ENCODE measurements at regions of chr12 and their contacts with region 1.

Region 1: DNA sequence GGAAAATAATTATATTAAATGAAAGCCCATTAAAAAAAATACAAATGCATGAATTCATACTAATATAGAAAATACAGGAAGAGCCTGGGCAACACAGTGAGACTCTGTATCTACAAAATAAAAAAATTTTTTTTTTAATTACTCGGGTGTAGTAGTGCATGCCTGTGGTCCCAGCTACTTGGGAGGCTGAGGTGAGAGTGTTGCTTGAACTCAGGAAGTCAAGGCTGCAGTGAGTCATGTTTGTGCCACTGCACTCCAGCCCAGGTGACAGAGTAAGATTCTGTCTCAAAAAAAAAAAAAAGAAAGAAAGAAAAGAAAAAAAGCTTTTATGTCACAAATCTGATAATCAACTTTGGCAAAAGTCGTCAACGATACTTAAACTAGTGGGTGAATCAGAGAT is 80.6 kb upstream of the PLEKHA5 start:
- DNase-seq: no peak
- H3K4me3 ChIP-seq: no peak overlapping the region
- H3K27ac ChIP-seq: no peak overlapping the region
- H3K27me3 ChIP-seq: no peaks in the 10 kb centered on the region
- CTCF ChIP-seq: no peak

Region 2: DNA sequence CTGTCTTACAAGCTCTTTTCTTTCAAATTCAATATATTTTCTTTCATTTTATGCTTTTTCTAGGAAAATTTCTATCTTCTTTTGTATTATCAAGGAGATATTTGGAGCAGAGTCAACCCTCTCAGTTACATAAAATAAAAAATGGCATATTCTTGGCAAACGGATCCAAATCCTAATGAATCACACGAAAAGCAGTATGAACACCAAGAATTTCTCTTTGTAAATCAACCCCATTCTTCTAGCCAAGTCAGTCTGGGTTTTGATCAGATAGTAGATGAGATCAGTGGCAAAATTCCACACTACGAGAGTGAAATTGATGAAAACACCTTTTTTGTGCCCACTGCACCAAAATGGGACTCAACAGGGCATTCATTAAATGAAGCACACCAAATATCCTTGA is 767.0 kb before region 1 on chr12:
- CTCF ChIA-PET with region 1: no interaction called
- POLR2A ChIA-PET with region 1: interaction called, 11 read pairs
- DNase-seq: no peak
- H3K4me3 ChIP-seq: no peak overlapping the region
- H3K27ac ChIP-seq: no peak overlapping the region
- H3K27me3 ChIP-seq: no peaks in the 10 kb centered on the region
- CTCF ChIP-seq: no peak

Region 3: GRCh38 chr12:19901841-19902240 is 852.9 kb after region 1 on chr12:
- CTCF ChIA-PET with region 1: no interaction called
- POLR2A ChIA-PET with region 1: no interaction called
- DNase-seq: no peak
- H3K4me3 ChIP-seq: no peak overlapping the region
- H3K27ac ChIP-seq: no peak overlapping the region
- H3K27me3 ChIP-seq: no peaks in the 10 kb centered on the region
- CTCF ChIP-seq: no peak

Measured in AG04450 (cell line).